ENCODE measurements at regions of chr3 and their contacts with region 1.

Region 1: DNA sequence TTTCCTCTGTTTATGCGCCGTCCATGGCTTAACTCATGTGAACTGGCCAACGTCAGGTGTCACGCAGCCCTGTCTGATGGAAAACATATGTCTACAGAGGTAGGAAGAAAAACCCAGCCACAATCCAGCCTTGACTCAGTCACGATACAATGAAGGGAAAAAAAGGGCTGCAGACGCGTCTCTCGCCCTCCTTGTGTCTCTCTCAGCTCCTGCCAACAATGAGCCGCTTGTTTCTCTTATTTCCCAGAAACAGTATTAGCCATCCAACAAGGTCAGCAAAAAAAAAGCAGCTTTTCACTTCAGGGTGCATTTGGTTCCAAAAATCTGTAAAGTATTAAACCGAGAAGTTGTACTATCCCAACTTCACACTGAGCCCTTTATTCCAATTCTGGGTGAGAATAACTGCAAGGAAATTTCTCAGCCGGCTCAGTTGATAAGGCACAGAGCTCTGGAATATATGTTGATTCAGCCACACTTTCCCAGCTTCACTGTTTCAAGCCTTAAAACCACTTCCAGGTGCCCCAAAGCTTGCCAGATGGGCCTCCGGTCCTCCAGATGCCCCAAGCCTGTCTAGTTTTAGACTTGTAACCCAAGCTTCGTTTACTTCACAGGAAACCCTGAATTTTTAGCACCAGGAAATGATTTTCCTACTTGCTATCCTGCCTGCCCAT is 79.4 kb downstream of the TM4SF4 start:
- DNase-seq: no peak

Region 2: DNA sequence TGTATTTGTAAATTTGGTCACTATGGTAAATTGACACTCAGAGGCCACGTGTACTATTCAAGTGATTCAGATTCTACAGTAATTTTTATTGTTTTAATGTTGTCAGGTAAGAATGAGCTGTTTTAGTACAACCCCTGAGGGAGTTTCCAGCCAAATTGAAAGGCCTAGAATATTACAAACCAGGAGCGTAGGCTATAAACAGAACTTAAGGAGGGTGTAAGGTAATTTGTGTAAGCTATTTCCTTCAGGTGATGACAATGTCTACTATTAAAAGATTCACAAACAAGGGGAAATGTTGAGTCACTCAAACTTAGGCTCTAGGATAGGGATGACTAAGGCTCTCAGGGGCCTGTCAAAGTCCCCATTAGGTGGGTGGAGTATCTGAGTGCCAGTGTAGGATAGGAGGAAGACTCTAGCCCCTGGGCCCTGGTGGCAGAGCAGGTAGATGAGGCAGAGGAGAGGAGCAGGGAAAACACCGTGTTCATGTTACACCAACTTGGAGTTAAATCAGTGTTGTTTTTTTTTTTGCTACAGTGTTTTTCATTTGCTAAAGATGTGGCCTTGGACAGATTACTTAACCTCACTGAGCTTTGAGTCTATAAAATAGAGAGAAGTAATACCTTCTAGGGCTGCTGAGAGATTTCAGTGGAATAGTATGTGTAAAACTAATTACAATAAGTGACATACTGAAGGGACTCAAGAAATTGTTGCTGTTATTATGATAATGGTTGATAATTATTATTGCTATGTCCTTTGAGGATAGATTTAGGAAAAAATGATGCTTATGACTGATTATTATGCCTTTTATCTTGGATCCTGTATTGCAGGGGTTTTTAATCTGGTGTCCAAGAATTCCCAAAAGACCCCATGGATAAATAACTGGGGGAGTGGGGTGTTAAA is 186.7 kb before region 1 on chr3:
- intact Hi-C with region 1: no loop called
- DNase-seq: no peak

Region 3: DNA sequence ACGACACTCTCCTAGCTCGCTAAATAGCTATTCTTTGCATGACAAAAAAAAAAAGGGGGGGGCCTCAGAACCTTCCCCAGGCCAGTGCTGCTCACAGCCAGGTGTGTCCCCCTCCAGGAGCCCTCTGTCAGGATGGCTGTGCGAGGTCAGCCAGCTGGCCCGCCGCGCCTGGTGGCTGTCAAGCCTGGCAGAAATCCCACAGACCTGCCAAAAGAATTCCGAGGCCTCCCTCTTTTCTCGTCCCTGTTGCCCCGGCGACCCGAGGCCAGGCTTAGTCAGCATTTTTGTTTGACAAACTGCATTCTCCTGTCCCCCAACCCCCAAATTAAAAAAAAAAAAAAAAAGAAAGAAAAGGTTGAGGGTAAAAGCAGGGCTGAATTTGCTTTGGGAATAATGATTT is 17.5 kb before region 1 on chr3:
- intact Hi-C with region 1: no loop called
- DNase-seq: peak; percentile 82

Region 4: DNA sequence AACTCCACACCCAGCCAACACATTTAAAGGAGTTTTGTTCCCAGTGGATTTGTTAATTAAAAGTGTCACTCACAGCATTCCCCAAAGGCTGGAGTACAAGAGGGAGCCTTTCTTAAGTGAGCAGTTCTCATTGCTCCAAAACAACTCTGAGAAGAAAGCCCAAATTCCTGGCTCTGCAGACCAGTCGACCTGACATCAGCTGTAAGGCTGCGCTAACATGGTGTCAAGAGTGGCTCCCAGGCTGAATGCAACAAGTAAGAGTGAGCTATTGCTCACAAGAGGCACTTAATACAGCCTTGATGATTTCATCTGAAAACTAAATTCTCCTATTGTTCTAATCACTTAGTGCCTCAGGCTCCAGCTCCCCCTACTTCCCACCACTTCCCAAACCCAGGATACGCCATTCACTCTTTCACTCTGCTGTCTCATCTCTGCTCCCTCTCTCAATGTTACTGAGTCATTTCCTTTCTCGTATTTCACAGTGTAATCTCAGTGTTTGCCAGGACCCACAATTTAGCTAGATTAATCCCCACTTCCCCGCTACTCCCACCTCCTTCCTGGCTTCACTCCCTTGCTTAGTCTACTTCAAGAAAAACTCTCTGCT is 22.1 kb after region 1 on chr3:
- intact Hi-C with region 1: loop called (anchors 2 kb)
- DNase-seq: no peak

Region 5: GRCh38 chr3:149589332-149589731 is 35.4 kb after region 1 on chr3:
- intact Hi-C with region 1: no loop called
- DNase-seq: no peak

Measured in cardiac septum (tissue), 1 donor.